ENCODE measurements at regions of chr1 and their contacts with region 1.

Region 1: DNA sequence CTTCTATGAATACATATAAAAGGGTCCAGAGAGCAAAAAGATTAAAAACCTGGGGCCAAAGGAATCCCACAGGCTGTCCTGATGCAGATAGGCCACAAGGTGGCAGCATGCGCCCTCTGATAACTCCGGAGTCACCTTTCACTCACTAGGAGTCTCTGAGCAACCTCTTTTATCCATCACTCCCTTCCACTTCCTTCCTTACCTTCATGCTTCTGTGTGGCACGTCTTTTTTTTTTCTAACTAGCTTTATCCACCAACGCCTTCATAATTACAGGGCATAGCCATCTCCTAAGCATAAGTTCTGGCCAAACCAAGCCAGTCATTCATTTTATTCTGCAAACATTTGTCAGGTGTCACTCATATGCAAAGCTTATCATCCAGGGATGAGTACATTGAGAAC is 3.9 kb upstream of the PGLYRP4 start:
- DNase-seq: peak; percentile 8 to 74 (median 64)
- ATAC-seq: peak; percentile 71
- H3K4me3 ChIP-seq: no peak overlapping the region
- H3K4me3 Mint-ChIP-seq: no peak overlapping the region
- H3K27ac ChIP-seq: no peak overlapping the region
- H3K27ac Mint-ChIP-seq: no peak overlapping the region
- H3K4me1 ChIP-seq: peaks cover 6% of the 10 kb centered on the region
- H3K4me1 Mint-ChIP-seq: peaks cover 12% of the 10 kb centered on the region
- H3K27me3 ChIP-seq: no peaks in the 10 kb centered on the region
- H3K27me3 Mint-ChIP-seq: peaks cover 7% of the 10 kb centered on the region
- CTCF ChIP-seq: peak; percentile 93

Region 2: DNA sequence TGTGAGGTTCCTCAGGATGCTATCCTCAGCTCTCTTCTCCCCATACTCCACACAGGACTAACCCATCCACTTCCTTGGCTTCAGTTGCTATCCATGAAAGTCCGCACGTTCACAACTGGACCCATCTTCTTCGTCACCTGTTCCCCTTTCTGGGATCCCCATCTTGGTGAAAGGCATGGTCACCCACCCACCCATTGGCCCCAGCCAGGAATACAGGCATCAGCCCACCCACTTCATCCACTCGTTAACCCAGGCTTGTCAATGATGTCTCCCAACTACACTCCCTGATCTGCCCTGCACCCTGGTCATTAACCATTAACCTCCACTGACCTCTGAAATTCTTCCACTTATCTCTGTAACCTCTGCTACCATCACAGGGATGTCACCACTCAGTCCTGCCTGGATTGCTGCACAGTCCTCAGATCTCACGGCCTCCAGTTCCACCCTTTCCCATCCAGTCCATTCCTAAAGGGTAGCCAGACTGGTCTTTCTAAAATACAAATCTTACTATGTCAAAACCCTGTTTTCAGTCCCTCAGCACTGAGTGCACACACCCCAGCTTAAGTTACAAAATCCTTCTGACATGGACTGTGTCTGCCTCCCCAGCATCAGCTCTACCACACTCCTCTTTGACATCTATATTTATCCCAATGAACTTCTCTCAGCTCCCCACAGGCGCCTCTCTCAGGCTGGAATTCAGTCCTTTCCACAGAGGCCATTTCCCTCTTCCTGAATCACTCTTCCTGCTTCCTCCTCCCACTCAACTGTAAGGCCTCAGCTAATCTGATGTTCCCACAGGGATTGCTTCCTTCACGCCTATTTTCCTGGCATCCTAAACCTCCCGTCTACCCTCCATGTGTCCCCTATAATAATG is 14.3 kb before region 1 on chr1:
- CTCF ChIA-PET with region 1: interaction called, 23 read pairs
- POLR2A ChIA-PET with region 1: no interaction called
- intact Hi-C with region 1: no loop called
- DNase-seq: no peak
- ATAC-seq: no peak
- H3K4me3 ChIP-seq: no peak overlapping the region
- H3K4me3 Mint-ChIP-seq: no peak overlapping the region
- H3K27ac ChIP-seq: no peak overlapping the region
- H3K27ac Mint-ChIP-seq: no peak overlapping the region
- H3K4me1 ChIP-seq: peaks cover 14% of the 10 kb centered on the region
- H3K4me1 Mint-ChIP-seq: peaks cover 21% of the 10 kb centered on the region
- H3K27me3 ChIP-seq: no peaks in the 10 kb centered on the region
- H3K27me3 Mint-ChIP-seq: peaks cover 15% of the 10 kb centered on the region
- CTCF ChIP-seq: no peak

Region 3: GRCh38 chr1:153365303-153366095 is 13.0 kb after region 1 on chr1:
- CTCF ChIA-PET with region 1: interaction called, 28 read pairs
- POLR2A ChIA-PET with region 1: no interaction called
- intact Hi-C with region 1: no loop called
- DNase-seq: no peak
- ATAC-seq: no peak
- H3K4me3 ChIP-seq: no peak overlapping the region
- H3K4me3 Mint-ChIP-seq: no peak overlapping the region
- H3K27ac ChIP-seq: no peak overlapping the region
- H3K27ac Mint-ChIP-seq: no peak overlapping the region
- H3K4me1 ChIP-seq: no peaks in the 10 kb centered on the region
- H3K4me1 Mint-ChIP-seq: no peaks in the 10 kb centered on the region
- H3K27me3 ChIP-seq: no peaks in the 10 kb centered on the region
- H3K27me3 Mint-ChIP-seq: peaks cover 19% of the 10 kb centered on the region
- CTCF ChIP-seq: no peak

Region 4: DNA sequence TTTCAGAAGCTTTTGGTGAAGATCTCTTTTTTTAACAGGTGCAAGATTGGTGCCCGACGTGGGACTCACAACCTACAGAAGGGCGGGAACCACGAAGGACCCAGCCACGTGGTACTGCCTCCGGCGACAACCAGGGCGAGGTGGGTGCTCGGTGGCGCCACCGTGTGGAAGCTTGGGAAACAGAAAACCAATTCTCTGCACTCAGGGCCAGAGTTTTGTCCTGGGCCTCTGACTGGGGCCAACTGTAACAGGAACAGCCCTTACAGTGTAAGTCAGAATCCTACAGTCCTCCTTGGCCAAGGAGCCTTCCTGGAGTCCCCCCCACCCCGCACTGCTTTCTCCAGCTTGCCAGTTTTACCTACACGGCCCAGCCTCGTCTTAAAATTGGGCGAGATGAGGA is 52.2 kb after region 1 on chr1:
- CTCF ChIA-PET with region 1: interaction called, 9 read pairs
- POLR2A ChIA-PET with region 1: no interaction called
- intact Hi-C with region 1: loop called (anchors 2 kb)
- DNase-seq: peak; percentile 12 to 64 (median 45)
- ATAC-seq: peak; percentile 55
- H3K4me3 ChIP-seq: no peak overlapping the region
- H3K4me3 Mint-ChIP-seq: no peak overlapping the region
- H3K27ac ChIP-seq: no peak overlapping the region
- H3K27ac Mint-ChIP-seq: no peak overlapping the region
- H3K4me1 ChIP-seq: peaks cover 8% of the 10 kb centered on the region
- H3K4me1 Mint-ChIP-seq: peaks cover 24% of the 10 kb centered on the region
- H3K27me3 ChIP-seq: no peaks in the 10 kb centered on the region
- H3K27me3 Mint-ChIP-seq: peaks cover 18% of the 10 kb centered on the region
- CTCF ChIP-seq: peak; percentile 46

Region 5: GRCh38 chr1:153494976-153495535 is 142.5 kb after region 1 on chr1:
- CTCF ChIA-PET with region 1: interaction called, 125 read pairs
- POLR2A ChIA-PET with region 1: no interaction called
- intact Hi-C with region 1: loop called in 1 of 2 experiments (anchors 1 kb)
- DNase-seq: peak; percentile 46 to 81 (median 72)
- ATAC-seq: peak; percentile 68
- H3K4me3 ChIP-seq: no peak overlapping the region
- H3K4me3 Mint-ChIP-seq: no peak overlapping the region
- H3K27ac ChIP-seq: no peak overlapping the region
- H3K27ac Mint-ChIP-seq: no peak overlapping the region
- H3K4me1 ChIP-seq: no peaks in the 10 kb centered on the region
- H3K4me1 Mint-ChIP-seq: no peaks in the 10 kb centered on the region
- H3K27me3 ChIP-seq: peaks cover 4 to 5% of the 10 kb centered on the region in 2 experiments
- H3K27me3 Mint-ChIP-seq: peaks cover 28% of the 10 kb centered on the region
- CTCF ChIP-seq: peak; percentile 91

Region 6: DNA sequence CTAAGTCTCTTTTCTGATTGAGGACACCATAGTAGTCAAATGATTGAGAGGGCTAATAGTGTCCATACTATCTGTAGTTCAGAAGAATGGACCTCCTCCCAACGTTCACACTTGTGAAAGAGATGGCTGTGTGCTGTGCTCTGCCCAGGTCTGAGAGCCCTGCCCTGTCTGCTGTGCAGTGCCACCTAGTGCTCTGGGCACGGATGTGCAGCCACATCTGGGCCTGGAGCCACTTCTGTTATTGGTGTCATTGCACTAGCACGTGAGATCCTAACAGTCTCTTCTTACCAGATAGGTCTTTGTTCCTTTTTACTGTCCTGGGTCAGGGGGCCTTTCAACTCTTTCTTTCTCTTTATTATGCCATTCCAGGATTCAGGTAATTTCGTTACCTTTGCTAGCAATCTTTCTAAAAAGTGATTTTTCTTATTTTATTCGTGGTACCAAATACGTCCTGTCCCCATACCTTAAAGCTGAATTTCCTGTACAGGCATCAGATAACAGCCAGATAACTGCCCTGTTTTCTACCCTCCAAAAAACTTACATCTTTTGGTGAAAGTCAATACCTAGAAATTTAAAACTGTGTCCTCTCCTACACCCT is 397.0 kb after region 1 on chr1:
- CTCF ChIA-PET with region 1: interaction called, 3 read pairs
- POLR2A ChIA-PET with region 1: no interaction called
- intact Hi-C with region 1: loop called in 1 of 2 experiments (anchors 5 kb)
- DNase-seq: peak; percentile 66 to 85 (median 77)
- ATAC-seq: peak; percentile 100
- H3K4me3 ChIP-seq: no peak overlapping the region
- H3K4me3 Mint-ChIP-seq: no peak overlapping the region
- H3K27ac ChIP-seq: no peak overlapping the region
- H3K27ac Mint-ChIP-seq: no peak overlapping the region
- H3K4me1 ChIP-seq: no peaks in the 10 kb centered on the region
- H3K4me1 Mint-ChIP-seq: peaks cover 4% of the 10 kb centered on the region
- H3K27me3 ChIP-seq: no peaks in the 10 kb centered on the region
- H3K27me3 Mint-ChIP-seq: no peaks in the 10 kb centered on the region
- CTCF ChIP-seq: peak; percentile 97